PC-3 (cell line): ENCODE measurements at regions of chr7 and their contacts with region 1.

Region 1: DNA sequence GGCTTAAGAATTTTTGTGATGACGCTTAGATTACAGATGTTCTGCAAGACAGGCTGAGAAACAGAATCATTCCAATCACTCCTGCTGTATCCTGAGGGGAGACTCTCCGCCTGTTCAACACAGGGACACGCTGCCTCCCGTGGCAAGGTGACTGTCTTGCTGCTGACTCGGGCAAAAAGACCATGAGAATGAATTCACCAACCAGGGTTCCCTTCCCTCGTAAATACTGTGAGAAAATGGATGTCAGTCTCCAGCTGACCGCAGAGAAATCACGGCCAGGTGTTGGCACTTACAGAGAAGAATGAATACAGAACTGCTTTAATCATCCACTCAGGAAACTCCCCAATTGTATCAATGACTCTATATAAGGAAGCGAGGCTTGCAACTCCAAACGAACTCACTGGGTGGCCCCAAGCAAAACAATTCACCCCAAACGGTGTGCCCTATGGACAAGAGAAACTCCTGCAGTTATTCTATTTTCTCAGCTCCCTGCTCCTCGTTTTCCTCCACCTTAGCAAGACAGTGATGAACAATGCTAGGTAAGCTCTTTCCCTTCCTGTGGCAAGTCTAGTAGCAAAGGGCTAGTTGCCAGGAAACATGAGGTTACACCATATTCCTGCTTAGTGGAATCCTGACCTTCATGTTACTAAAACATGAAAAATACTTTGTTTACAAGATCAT is 22.8 kb downstream of the GNA12 start:
- DNase-seq: peak; percentile 68
- ATAC-seq: peak; percentile 43
- H3K4me3 ChIP-seq: peak overlapping the region; percentile 7; the same call in 1 of the 2 replicates
- H3K27ac ChIP-seq: peak overlapping the region; percentile 92
- H3K4me1 ChIP-seq: peaks cover 45% of the 10 kb centered on the region
- H3K27me3 ChIP-seq: no peaks in the 10 kb centered on the region
- CTCF ChIP-seq: peak; percentile 39; the same call in 1 of the 2 replicates

Region 2: DNA sequence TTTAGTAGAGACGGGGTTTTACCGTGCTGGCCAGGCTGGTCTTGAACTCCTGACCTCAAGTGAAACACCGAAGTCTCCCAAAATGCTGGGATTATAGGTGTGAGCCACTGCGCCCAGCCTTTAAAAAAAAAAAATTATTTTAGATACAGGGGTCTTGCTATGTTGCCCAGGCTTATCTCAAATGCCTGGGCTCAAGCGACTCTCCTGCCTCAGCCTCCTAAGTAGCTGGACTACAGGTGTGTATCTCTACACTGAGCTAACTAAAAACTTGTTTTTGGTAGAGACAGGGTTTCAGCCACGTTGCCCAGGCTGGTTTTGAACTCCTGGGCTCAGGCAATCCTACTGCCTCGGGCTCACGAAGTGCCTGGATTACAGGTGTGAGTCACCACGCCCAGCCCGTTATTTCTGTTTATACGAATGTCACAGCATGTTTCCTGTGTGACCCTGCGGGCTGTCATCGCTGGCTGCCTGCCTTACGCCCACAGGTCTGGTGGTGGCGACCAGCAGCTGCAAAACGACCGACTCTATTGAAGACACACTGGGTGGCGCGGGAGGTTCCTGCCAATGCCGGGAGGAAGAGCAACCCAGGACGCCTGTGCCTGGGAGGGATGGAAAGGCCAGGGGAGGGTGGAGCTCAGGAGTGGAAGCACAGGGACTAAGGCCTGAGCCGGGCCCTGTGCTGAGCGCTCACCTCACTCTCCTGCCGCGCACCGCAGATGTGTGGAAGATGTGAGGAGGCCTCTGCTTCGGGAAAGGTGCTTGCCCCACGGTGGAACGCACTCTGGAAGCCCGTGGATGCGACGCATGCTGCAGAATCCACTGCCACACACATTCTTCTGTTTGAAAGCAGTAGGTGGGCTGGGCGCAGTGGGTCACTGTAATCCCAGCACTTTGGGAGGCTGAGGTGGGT is 100.5 kb before region 1 on chr7:
- CTCF ChIA-PET with region 1: interaction called, 7 read pairs
- POLR2A ChIA-PET with region 1: no interaction called
- intact Hi-C with region 1: loop called (anchors 2 kb)
- DNase-seq: peak; percentile 96
- ATAC-seq: peak; percentile 96
- H3K4me3 ChIP-seq: no peak overlapping the region
- H3K27ac ChIP-seq: peak overlapping the region; percentile 45
- H3K4me1 ChIP-seq: 0 out of 2 replicates have a peak, but pooled peaks cover 3% of the 10 kb centered on the region
- H3K27me3 ChIP-seq: no peaks in the 10 kb centered on the region
- CTCF ChIP-seq: peak; percentile 69

Region 3: GRCh38 chr7:2771274-2771731 is 50.0 kb before region 1 on chr7:
- CTCF ChIA-PET with region 1: no interaction called
- POLR2A ChIA-PET with region 1: no interaction called
- intact Hi-C with region 1: loop called (anchors 5 kb)
- DNase-seq: no peak
- ATAC-seq: no peak
- H3K4me3 ChIP-seq: no peak overlapping the region
- H3K27ac ChIP-seq: no peak overlapping the region
- H3K4me1 ChIP-seq: peaks cover 40% of the 10 kb centered on the region
- H3K27me3 ChIP-seq: no peaks in the 10 kb centered on the region
- CTCF ChIP-seq: no peak

Region 4: GRCh38 chr7:2800931-2801688 is 20.2 kb before region 1 on chr7:
- CTCF ChIA-PET with region 1: interaction called, 5 read pairs
- POLR2A ChIA-PET with region 1: interaction called, 3 read pairs
- intact Hi-C with region 1: loop called (anchors 2 kb)
- DNase-seq: peak; percentile 58
- ATAC-seq: no peak
- H3K4me3 ChIP-seq: peak overlapping the region; percentile 56
- H3K27ac ChIP-seq: peak overlapping the region; percentile 92
- H3K4me1 ChIP-seq: peaks cover 41% of the 10 kb centered on the region
- H3K27me3 ChIP-seq: no peaks in the 10 kb centered on the region
- CTCF ChIP-seq: no peak

Region 5: DNA sequence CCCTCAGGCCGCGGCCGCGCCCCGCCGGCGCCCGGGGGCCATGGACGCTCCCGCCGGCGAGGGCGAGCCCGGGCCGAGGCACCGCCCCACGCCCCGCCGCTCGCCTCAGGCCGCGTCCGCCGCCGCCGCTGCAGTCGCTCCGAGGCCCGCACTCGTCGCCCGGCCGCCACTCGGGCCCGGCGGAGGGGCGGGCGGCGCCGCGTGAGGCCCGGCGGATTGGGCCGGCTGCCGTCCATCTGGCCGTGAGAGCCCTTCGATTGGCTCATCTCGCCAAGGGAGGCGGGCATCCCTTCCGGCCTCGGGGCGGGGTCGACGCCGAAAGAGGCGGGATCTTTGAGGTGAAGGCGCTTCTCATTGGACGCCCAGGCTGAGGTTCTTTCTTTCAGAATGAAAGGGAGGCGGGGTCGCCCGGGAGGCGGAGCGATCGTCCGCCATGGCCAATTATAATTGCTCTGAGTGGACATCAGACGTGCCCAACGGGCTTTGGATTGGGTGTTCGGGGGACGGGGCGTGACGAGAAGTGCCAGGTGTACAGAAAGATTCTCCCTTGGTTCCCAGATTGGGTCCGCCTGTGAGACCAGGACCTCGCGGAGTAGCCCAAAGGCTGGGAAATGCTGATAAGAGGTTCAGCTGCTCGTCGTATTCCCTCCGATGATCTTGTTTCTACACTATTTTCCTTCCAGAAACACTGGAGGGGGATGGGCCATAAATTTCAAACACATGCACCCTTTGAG is 23.0 kb after region 1 on chr7 and contains the start of gene GNA12:
- CTCF ChIA-PET with region 1: no interaction called
- POLR2A ChIA-PET with region 1: no interaction called
- intact Hi-C with region 1: loop called (anchors 2 kb)
- DNase-seq: peak; percentile 99
- ATAC-seq: peak; percentile 94
- H3K4me3 ChIP-seq: peak within 1 kb of the TSS; percentile 77
- H3K27ac ChIP-seq: no peak within 1 kb of the TSS
- H3K4me1 ChIP-seq: peaks cover 18% of the 10 kb centered on the region
- H3K27me3 ChIP-seq: no peaks in the 10 kb centered on the region
- CTCF ChIP-seq: no peak
- total RNA-seq, gene GNA12: 15.0 and 26.8 TPM in 2 replicates